Caco-2 (cell line): ENCODE measurements at regions of chr10 and their contacts with region 1.

Region 1: DNA sequence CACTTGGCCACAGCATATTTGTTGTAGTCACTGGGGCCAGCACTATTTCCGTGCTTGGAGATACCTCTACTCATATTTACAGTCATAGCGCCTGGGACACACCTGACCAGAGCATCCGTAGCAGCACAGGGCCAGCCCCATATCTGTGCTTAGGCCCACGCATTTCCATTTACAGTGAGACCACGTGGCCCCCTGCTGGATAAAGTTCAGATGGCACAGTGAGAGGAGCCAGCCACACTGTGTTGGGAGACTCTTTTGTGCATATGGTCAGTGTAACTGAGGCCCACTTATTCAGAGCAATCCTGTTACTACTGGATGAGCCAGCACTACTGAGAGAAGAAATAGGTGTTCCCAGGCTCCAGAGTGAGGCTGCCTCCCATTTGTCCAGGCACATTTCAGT is 455.3 kb downstream of the REEP3 start:
- DNase-seq: peak; percentile 67 to 74
- H3K4me3 ChIP-seq: no peak overlapping the region
- H3K4me3 Mint-ChIP-seq: no peak overlapping the region
- H3K27ac Mint-ChIP-seq: no peak overlapping the region
- H3K4me1 ChIP-seq: no peaks in the 10 kb centered on the region
- H3K4me1 Mint-ChIP-seq: peaks cover 7% of the 10 kb centered on the region
- H3K27me3 ChIP-seq: no peaks in the 10 kb centered on the region
- H3K27me3 Mint-ChIP-seq: peaks cover 7% of the 10 kb centered on the region
- CTCF ChIP-seq: peak; percentile 88 to 90

Region 2: DNA sequence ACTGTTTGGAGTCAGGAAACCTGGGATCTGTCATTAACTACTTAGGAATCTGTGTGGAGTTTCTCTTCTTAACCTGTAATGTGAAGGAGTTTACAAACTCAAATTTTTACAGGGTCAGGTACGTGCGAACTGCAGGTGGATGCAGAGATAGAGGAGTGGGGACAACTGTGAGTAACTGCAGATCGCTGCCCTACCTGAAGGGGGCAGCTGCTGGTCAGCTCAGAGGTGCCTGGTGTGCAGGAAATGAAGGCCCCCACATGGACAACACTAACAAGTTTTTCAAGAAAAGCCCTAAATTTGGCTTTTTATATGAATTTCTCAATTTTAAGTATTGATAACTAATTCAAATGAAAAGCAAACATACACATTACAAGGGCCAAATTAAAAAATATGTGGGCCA is 75.3 kb before region 1 on chr10:
- CTCF ChIA-PET with region 1: interaction called, 3 read pairs
- POLR2A ChIA-PET with region 1: no interaction called
- intact Hi-C with region 1: loop called (anchors 1 kb)
- DNase-seq: peak in 1 of 2 experiments; percentile 49
- H3K4me3 ChIP-seq: no peak overlapping the region
- H3K4me3 Mint-ChIP-seq: no peak overlapping the region
- H3K27ac Mint-ChIP-seq: no peak overlapping the region
- H3K4me1 ChIP-seq: no peaks in the 10 kb centered on the region
- H3K4me1 Mint-ChIP-seq: no peaks in the 10 kb centered on the region
- H3K27me3 ChIP-seq: no peaks in the 10 kb centered on the region
- H3K27me3 Mint-ChIP-seq: peaks cover 7% of the 10 kb centered on the region
- CTCF ChIP-seq: peak; percentile 72 to 80

Region 3: GRCh38 chr10:63935705-63936104 is 40.8 kb before region 1 on chr10:
- CTCF ChIA-PET with region 1: interaction called, 4 read pairs
- POLR2A ChIA-PET with region 1: no interaction called
- intact Hi-C with region 1: loop called (anchors 1 kb)
- DNase-seq: peak in 1 of 2 experiments; percentile 24
- H3K4me3 ChIP-seq: no peak overlapping the region
- H3K4me3 Mint-ChIP-seq: no peak overlapping the region
- H3K27ac Mint-ChIP-seq: no peak overlapping the region
- H3K4me1 ChIP-seq: no peaks in the 10 kb centered on the region
- H3K4me1 Mint-ChIP-seq: no peaks in the 10 kb centered on the region
- H3K27me3 ChIP-seq: 0 out of 2 replicates have a peak, but pooled peaks cover 2% of the 10 kb centered on the region
- H3K27me3 Mint-ChIP-seq: peaks cover 10% of the 10 kb centered on the region
- CTCF ChIP-seq: peak; percentile 30 to 53

Region 4: DNA sequence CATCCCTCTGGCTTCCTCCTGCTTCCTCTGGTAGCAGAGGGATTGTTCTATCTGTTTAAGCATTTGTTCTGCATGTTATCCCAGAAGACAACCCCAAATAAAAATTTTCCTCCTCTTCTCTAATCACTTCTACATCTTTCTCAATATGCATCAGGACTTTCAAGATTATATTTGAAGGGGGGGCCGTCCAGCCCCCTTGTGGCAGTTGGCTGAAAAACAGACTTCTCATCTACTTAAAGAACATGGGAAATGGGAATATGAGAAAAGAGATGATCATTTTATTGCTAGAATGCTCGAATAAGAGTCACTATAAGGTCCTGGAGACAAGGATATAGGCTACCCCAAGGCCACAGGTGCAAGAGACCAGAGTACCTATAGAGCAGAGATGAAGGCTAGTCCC is 10.7 kb after region 1 on chr10:
- CTCF ChIA-PET with region 1: interaction called, 10 read pairs
- POLR2A ChIA-PET with region 1: no interaction called
- intact Hi-C with region 1: no loop called
- DNase-seq: no peak
- H3K4me3 ChIP-seq: no peak overlapping the region
- H3K4me3 Mint-ChIP-seq: no peak overlapping the region
- H3K27ac Mint-ChIP-seq: no peak overlapping the region
- H3K4me1 ChIP-seq: no peaks in the 10 kb centered on the region
- H3K4me1 Mint-ChIP-seq: no peaks in the 10 kb centered on the region
- H3K27me3 ChIP-seq: no peaks in the 10 kb centered on the region
- H3K27me3 Mint-ChIP-seq: peaks cover 3% of the 10 kb centered on the region
- CTCF ChIP-seq: peak in 1 of 2 experiments; percentile 18

Region 5: DNA sequence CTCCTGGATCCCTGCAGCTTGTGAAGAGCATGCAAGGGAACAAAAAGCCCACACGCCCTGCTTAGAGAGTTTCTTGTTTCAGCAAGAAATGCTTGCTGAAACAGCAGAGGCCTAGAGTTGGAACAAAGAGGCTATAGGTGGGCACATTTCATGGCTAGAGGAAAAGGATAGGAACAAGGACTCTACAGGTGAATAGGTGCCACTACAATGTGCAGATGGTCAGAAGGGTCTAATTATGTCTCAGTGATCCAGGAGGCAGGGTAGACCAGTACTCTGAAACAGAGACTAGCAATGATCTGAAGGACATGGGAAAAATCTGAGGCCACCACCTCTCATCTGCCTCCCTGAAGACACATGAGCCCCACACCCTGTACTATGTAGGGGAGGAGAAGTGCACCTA is 153.6 kb after region 1 on chr10:
- CTCF ChIA-PET with region 1: no interaction called
- POLR2A ChIA-PET with region 1: no interaction called
- intact Hi-C with region 1: no loop called
- DNase-seq: no peak
- H3K4me3 ChIP-seq: no peak overlapping the region
- H3K4me3 Mint-ChIP-seq: no peak overlapping the region
- H3K27ac Mint-ChIP-seq: no peak overlapping the region
- H3K4me1 ChIP-seq: no peaks in the 10 kb centered on the region
- H3K4me1 Mint-ChIP-seq: no peaks in the 10 kb centered on the region
- H3K27me3 ChIP-seq: no peaks in the 10 kb centered on the region
- H3K27me3 Mint-ChIP-seq: peaks cover 10% of the 10 kb centered on the region
- CTCF ChIP-seq: no peak